Activated T-helper 1 cell treated with anti-CD3 and anti-CD28 coated beads, Interleukin-12 subunit alpha, Interleukin-12 subunit beta, Interleukin-2, Interleukin-4 antibody, amounts not matched to agents 30 ng/mL and 10 ng/mL and 1 ng/mL, durations not matched to agents 14 hours and 24 hours and 36 hours (primary cell): ENCODE measurements at regions of chr16 and their contacts with region 1.

Region 1: DNA sequence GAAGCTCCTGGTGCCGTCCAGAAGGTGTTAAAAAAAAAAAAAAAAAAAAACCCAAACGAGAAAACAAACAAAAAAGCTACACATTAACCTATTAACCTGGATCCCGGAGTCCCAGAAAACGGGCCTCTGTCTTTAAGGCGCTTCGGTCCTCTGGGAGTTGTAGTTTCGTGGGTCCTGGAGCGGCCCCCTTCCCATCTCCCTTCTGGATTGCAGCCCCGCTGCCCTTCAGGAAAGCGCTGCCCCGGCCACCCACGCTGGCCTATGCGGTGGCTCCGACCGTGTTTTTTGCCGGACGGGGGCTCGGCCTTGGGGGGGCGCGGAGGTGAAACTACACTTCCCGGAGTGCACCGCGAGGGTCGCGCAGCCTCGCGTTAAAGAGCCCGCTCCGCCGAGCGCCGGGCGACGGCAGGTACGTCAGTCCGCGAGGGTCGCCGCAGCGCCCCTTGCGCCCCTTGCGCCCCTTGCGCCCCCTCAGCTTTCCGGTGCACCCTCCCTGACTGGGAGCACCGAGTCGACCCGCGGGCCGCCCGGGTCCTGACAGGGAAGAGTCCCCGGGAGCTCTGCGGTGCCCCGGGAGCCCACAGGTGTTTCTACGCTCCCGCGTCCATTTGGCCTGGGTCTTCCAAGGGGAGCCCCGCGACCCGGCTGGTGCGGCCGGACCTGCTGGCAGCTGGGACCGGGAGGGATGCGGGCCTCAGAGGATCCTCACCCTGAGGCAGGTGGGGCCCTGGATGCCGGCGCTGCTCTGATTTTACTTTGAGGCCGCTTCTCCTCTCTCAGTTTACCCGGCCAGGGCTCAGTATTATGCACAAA is at the start of gene FCSK:
- DNase-seq: peak; percentile 52
- H3K4me3 Mint-ChIP-seq: peak within 1 kb of the TSS; percentile 91
- H3K27ac Mint-ChIP-seq: peak within 1 kb of the TSS; percentile 83
- H3K4me1 Mint-ChIP-seq: peaks cover 21% of the 10 kb centered on the region
- H3K27me3 Mint-ChIP-seq: no peaks in the 10 kb centered on the region
- total RNA-seq, gene FCSK: 19.7 and 21.0 TPM in 2 replicates

Region 2: GRCh38 chr16:70395345-70395901 is 59.0 kb before region 1 on chr16:
- intact Hi-C with region 1: loop called (anchors 1 kb)
- DNase-seq: peak; percentile 48
- H3K4me3 Mint-ChIP-seq: no peak overlapping the region
- H3K27ac Mint-ChIP-seq: no peak overlapping the region
- H3K4me1 Mint-ChIP-seq: no peaks in the 10 kb centered on the region
- H3K27me3 Mint-ChIP-seq: no peaks in the 10 kb centered on the region

Region 3: DNA sequence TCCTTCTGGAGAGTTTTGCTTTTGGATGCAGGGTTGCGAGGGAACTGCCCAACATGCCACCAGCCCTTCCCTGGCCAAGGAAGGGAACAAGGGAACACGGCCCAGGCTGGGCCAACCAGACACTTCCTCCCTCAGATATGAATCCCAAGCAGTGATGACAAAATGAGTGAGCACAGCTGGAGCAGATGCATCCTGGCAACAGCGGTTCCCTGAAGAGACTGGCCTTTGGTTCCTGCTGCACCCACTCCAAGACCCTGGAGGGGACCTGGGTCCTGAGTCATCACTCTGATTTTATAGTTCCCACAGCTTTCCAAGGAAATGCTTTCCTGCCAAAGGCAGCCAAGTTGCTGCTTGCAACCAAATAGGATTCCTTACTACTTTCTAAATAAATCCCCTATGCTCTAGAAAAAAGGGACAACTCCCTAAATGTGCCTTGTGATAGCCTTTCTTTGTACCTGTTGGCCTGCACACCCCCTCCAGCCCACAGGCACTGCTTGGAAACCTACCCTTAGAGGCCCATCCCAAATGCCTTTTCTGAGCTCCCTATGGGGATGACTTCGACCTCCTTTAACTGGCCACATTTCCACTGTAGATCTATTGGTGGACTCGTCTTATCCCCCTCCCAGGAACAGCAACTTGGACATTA is 20.8 kb before region 1 on chr16:
- intact Hi-C with region 1: no loop called
- DNase-seq: no peak
- H3K4me3 Mint-ChIP-seq: no peak overlapping the region
- H3K27ac Mint-ChIP-seq: no peak overlapping the region
- H3K4me1 Mint-ChIP-seq: peaks cover 76% of the 10 kb centered on the region
- H3K27me3 Mint-ChIP-seq: no peaks in the 10 kb centered on the region